ENCODE measurements at regions of chr3 and their contacts with region 1.

Region 1: DNA sequence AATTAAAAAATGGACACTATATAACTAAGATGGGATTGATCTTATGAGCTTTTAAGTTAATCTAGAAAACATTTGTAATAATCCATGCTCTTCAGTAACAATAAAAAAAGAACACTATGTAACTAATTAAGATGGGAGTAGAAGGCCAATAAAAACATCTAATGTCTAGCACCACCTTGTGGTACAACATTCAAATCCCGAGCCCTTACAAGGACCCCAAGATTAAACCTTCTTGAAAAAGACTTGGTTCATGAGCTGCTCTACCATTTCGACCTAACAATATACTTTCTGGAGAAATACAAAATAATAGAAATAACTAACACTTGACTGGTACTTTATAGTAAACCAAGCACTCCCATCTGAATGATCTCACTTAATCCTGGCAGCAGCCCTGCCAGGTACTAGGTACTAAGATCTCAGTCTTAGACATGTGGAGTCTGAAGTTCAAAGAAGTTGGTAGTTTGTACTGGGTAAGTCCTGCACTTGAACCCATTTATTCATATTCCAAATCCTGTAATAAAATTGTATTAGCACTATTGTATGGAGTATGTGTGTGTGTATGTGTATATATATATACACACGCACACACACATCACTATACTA is 21.8 kb downstream of the METTL6 start:
- DNase-seq: no peak
- ATAC-seq: peak; percentile 97
- H3K4me3 ChIP-seq: no peak overlapping the region
- H3K27ac ChIP-seq: no peak overlapping the region
- H3K4me1 ChIP-seq: peaks cover 5% of the 10 kb centered on the region
- H3K27me3 ChIP-seq: no peaks in the 10 kb centered on the region
- CTCF ChIP-seq: peak; percentile 44 to 75 (median 58); a peak in 5 of 6 replicates
- EP300 ChIP-seq: no peak
- POLR2A ChIP-seq: no peak
- RAD21 ChIP-seq: peak; percentile 69

Region 2: DNA sequence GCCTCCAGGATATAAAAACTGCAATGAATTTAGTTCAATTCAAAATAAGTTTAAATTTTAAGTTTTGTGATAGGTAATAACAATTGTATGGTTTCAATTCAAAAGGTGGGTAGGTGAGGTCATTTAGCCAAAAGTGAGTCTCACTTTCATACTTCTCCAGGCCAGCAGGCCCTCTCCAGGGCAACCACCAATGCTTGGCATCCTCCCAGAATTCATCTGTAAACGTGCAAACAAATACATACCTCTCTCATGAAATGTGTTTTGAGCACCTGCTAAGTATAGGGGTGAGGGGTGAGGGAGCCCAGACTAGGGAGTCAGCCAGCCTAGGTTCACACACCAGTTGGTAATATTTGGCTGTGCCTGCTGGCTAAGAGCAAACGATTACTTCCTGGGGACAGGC is 284.6 kb before region 1 on chr3:
- CTCF ChIA-PET with region 1: interaction called, 7 read pairs
- POLR2A ChIA-PET with region 1: no interaction called
- RAD21 ChIA-PET with region 1: interaction called, 5 read pairs
- SMC1A ChIA-PET with region 1: interaction called, 5 read pairs
- in situ Hi-C with region 1: loop called (anchors 5 kb)
- intact Hi-C with region 1: no loop called
- DNase-seq: peak; percentile 24
- ATAC-seq: peak; percentile 87
- H3K4me3 ChIP-seq: no peak overlapping the region
- H3K27ac ChIP-seq: no peak overlapping the region
- H3K4me1 ChIP-seq: peaks cover 14% of the 10 kb centered on the region
- H3K27me3 ChIP-seq: no peaks in the 10 kb centered on the region
- CTCF ChIP-seq: no peak
- EP300 ChIP-seq: no peak
- POLR2A ChIP-seq: no peak
- RAD21 ChIP-seq: no peak

Region 3: DNA sequence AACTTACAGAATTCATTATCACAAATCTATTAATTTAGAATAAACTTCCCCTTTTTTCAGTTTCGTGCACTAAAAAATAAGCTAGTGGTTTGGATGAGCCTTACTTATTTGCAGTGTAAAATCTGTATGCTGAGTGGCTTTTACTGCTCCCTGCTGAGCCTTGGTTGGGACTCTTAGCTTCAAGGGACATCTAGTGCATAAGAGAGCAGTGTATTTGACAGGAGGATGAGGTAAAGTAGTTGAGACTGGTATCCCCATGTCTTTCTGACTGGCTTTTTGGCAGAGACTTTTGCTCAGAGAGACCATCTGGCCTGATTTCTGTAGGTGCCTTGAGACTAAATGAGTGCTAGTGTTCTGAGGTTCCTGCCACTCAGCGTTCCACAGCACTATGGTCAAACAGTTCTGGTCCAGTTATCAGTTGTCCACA is 187.7 kb before region 1 on chr3:
- CTCF ChIA-PET with region 1: interaction called, 11 read pairs
- POLR2A ChIA-PET with region 1: no interaction called
- RAD21 ChIA-PET with region 1: interaction called, 6 read pairs
- SMC1A ChIA-PET with region 1: interaction called, 5 read pairs
- in situ Hi-C with region 1: no loop called
- intact Hi-C with region 1: no loop called
- DNase-seq: no peak
- ATAC-seq: peak; percentile 56
- H3K4me3 ChIP-seq: no peak overlapping the region
- H3K27ac ChIP-seq: no peak overlapping the region
- H3K4me1 ChIP-seq: peaks cover 7% of the 10 kb centered on the region; the same call in 1 of the 2 replicates
- H3K27me3 ChIP-seq: no peaks in the 10 kb centered on the region
- CTCF ChIP-seq: no peak
- EP300 ChIP-seq: no peak
- POLR2A ChIP-seq: no peak
- RAD21 ChIP-seq: no peak

Region 4: DNA sequence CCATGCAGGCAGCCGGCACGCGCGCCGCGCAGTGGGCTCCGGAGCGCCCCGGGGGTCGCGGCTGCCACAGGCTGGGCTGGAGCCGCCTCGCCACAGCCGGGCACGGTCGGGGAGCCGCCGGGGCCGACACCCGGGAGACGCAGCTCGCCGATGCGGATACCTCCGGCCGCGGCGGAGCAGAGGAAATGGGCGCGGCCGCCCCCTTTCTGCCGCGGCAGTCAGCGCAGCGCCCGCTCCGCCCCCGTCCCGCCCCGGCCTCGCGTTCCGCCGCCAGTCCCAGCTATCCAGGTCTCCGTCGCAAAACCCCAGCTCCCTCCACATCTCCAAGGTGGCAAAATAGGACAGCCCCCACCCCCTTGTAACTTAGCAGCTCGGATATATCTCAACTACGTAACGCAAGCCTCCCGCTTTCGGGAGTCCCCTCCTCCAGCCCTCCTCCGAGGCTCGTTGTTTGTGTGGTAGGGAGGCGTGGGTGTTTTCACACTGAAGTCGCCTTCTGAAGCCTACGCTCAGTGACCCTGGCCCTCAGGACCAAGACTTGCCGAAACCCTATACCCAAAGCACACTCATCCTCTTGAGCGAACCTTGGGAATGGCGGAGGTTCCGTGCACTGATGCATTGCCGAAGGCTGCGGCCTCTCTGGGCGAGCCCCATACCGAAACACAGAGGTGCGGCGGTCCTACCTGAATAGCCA is 73.0 kb before region 1 on chr3 and contains the start of gene SH3BP5:
- CTCF ChIA-PET with region 1: interaction called, 14 read pairs
- POLR2A ChIA-PET with region 1: no interaction called
- RAD21 ChIA-PET with region 1: interaction called, 6 read pairs
- SMC1A ChIA-PET with region 1: interaction called, 6 read pairs
- in situ Hi-C with region 1: no loop called
- intact Hi-C with region 1: no loop called
- DNase-seq: no peak
- ATAC-seq: peak; percentile 85
- H3K4me3 ChIP-seq: peak within 1 kb of the TSS; percentile 86
- H3K27ac ChIP-seq: peak within 1 kb of the TSS; percentile 41
- H3K4me1 ChIP-seq: peaks cover 36% of the 10 kb centered on the region
- H3K27me3 ChIP-seq: no peaks in the 10 kb centered on the region
- CTCF ChIP-seq: peak; percentile 53 to 67 (median 59); a peak in 5 of 6 replicates
- EP300 ChIP-seq: no peak; a peak in 1 of 4 replicates
- POLR2A ChIP-seq: peak; percentile 84
- RAD21 ChIP-seq: peak; percentile 31; the same call in 1 of the 2 replicates
- polyA plus RNA-seq, gene SH3BP5: 14.9 to 33.8 TPM

Region 5: GRCh38 chr3:15377961-15378791 is 27.4 kb before region 1 on chr3:
- CTCF ChIA-PET with region 1: interaction called, 45 read pairs
- POLR2A ChIA-PET with region 1: interaction called, 5 read pairs
- RAD21 ChIA-PET with region 1: interaction called, 19 read pairs
- SMC1A ChIA-PET with region 1: interaction called, 59 read pairs
- in situ Hi-C with region 1: no loop called
- intact Hi-C with region 1: no loop called
- DNase-seq: peak; percentile 81
- ATAC-seq: peak; percentile 95
- H3K4me3 ChIP-seq: no peak overlapping the region
- H3K27ac ChIP-seq: peak overlapping the region; percentile 27; the same call in 1 of the 2 replicates
- H3K4me1 ChIP-seq: peaks cover 16% of the 10 kb centered on the region
- H3K27me3 ChIP-seq: no peaks in the 10 kb centered on the region
- CTCF ChIP-seq: peak; percentile 82 to 92 (median 86)
- EP300 ChIP-seq: peak; percentile 44 to 85; a peak in 2 of 4 replicates
- POLR2A ChIP-seq: no peak
- RAD21 ChIP-seq: peak; percentile 80

Region 6: DNA sequence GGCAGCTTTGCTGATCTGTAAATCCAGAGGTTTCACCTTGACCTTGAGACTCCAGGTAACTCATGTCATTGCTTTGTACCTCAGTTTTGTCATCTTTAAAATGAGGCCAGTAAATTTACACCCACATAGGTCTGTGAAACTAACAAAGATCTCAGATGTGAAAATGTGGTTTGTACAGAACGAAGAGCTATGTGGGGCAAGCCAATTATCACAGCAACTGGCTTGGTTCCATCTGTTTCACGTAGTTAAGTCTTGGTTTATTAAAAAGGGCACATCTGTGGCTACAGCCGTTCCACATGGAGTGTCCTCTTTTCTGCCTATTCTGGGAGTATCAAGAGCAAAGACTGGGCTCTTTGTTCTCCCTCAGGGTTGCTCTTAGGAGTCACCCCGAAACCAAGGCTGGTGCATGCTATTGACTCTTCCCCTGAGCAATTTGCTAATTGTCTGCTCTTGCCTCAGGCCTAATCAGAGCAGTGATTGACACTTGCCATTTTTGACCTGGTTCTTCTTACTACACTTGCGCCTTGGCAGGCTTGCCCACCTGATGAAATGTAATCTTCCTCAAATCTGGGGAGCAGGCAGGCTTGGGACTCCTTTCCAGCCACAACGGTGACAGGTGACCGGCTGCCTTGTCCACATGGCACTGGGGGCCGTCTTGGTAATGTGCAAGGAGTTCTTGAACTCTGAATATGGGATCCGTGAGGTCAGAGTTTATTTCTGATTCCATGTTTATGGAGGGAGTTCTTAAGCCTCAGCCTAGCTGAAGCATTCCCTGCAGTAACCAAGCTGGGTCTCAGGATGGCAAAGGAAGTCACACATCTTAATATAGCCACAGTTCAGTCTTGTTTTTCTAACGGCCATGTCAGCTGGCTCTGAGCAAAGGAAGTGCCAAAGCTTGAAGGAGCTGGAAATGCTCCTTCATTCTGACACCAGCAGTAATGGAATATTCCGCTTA is 62.0 kb after region 1 on chr3:
- CTCF ChIA-PET with region 1: interaction called, 6 read pairs
- POLR2A ChIA-PET with region 1: no interaction called
- RAD21 ChIA-PET with region 1: interaction called, 3 read pairs
- SMC1A ChIA-PET with region 1: interaction called, 16 read pairs
- in situ Hi-C with region 1: no loop called
- intact Hi-C with region 1: no loop called
- DNase-seq: peak; percentile 85
- ATAC-seq: peak; percentile 97
- H3K4me3 ChIP-seq: no peak overlapping the region
- H3K27ac ChIP-seq: no peak overlapping the region
- H3K4me1 ChIP-seq: peaks cover 6% of the 10 kb centered on the region
- H3K27me3 ChIP-seq: no peaks in the 10 kb centered on the region
- CTCF ChIP-seq: no peak
- EP300 ChIP-seq: peak; percentile 66 to 78; a peak in 2 of 4 replicates
- POLR2A ChIP-seq: no peak
- RAD21 ChIP-seq: no peak